Left ventricle myocardium superior (tissue), 1 donor: ENCODE measurements at regions of chr21 and their contacts with region 1.

Region 1: DNA sequence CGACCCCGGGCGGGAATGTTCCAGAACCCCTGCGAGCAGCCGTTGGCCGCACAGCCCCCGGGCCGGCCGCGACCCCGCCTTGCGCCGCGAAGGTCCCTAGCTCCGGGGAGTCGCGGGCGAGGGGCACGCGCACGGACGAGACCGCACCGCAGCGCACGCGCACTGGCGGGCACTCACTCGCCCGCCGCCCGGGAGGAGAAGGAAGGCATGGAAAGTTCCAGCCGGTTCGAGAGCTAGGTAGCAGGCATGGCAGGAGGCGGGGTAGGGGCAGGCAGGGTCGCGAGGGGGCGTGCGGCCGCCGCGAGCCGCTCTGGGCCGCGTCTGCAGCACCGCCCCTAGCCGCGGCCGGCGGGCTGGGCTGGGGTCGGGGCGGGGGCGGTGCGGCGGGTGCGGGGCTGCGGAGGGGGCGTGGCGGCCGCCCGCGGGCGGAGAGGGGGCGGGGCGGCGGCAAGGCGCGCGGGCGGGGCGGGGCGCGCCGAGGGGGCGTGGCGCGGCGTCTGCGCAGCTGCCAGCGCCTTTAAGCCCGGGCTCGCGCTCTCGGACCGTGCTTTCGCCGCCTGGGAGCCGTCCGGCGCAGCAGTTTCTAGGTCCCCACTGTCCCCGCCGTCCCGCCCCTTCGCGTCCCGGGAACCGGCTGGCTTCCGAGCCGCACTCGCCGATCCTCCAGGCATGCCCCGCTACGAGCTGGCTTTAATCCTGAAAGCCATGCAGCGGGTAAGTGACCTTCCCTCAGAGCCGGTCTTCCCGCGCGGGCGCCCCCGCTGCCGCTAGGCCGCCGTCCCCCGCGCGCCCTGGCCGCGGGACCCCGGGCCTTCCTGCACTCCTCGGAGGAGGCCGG is at the starts of genes MRPS6 and SLC5A3:
- DNase-seq: peak; percentile 91
- ATAC-seq: peak; percentile 89
- total RNA-seq, gene MRPS6: 63.0 TPM
- total RNA-seq, gene SLC5A3: 4.3 TPM

Region 2: GRCh38 chr21:33434770-33435360 is 638.4 kb before region 1 on chr21:
- intact Hi-C with region 1: no loop called
- DNase-seq: no peak
- ATAC-seq: peak; percentile 83

Region 3: DNA sequence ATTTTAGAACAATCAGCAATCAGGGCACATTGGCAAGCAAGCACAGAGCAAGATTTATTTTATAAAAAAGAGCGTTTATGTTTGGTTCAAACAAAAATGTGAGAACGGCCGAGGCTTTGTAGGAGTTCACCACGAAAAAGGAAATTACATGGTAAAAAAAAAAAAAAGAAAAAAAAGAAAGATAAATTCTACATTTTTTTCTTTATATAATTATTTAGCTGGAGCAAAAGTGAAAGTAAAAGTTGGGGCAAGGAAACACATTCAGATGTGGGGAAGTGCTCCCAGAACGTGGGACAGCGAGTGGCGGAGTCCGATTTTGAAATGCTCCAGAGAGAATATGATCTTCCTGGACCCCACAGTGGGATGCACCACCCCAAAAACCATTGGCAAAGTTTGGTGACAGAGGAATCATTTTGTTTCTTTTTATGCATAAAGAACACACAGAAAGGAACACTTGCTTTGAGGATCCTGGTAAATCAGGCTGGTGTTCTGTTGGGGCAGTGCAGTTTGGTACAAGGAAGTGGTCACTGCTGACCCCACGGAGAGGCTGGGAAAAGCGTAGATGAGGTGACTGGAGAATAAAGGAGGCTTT is 141.4 kb before region 1 on chr21:
- intact Hi-C with region 1: loop called (anchors 10 kb)
- DNase-seq: no peak
- ATAC-seq: peak; percentile 65

Region 4: DNA sequence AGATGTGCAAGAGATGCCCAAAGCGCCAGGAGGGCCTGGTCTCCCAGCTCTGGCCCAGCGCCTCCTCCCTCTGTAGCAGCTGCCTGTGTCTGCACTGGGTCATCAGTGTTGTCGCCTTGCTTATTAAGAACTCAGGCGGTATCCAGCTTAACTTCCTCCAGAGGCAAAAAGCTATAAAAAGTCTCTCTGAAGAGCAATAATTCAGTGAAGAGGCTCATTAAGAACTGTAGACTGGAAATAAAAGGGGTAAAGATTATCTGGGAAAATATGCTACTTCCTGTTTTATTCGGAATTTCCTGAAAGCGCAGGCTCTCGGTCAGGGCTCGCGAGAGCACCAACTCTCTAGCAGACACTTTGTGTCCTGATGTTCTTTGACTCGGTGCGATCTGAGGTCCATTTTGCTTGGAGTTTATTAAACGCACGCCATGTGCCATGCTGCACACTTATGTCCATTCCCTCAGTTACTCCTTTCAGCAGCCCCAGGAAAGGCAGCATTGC is 70.5 kb after region 1 on chr21:
- intact Hi-C with region 1: no loop called
- DNase-seq: no peak
- ATAC-seq: no peak